ENCODE measurements at regions of chr7 and their contacts with region 1.

Region 1: DNA sequence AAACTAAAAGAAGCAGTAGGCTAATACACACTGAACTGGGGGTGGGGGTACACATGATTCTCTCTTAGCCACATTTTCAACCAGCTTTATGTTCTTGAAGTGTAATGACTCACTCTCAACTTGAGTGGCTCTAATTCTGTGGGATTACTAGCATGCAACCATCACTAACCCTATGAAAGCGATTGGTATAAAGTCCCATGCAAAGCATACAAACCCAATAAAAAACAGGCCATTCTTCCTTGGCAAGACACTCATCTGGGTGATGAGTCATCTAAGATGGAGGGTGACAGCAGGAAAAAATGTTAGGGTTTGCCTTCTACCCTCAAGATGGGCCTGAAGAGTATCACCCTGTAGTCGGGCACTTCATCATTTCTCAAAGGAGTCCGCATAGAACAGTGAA is 14.9 kb upstream of the PON3 start:
- DNase-seq: peak in 1 of 2 experiments; percentile 57
- ATAC-seq: peak; percentile 60 to 63
- H3K4me3 ChIP-seq: no peak overlapping the region
- H3K27ac ChIP-seq: peak overlapping the region; percentile 0 to 63; a peak in 4 of 6 replicates
- H3K4me1 ChIP-seq: peaks cover 86% of the 10 kb centered on the region
- CTCF ChIP-seq: no peak
- EP300 ChIP-seq: no peak
- POLR2A ChIP-seq: no peak
- RAD21 ChIP-seq: no peak

Region 2: DNA sequence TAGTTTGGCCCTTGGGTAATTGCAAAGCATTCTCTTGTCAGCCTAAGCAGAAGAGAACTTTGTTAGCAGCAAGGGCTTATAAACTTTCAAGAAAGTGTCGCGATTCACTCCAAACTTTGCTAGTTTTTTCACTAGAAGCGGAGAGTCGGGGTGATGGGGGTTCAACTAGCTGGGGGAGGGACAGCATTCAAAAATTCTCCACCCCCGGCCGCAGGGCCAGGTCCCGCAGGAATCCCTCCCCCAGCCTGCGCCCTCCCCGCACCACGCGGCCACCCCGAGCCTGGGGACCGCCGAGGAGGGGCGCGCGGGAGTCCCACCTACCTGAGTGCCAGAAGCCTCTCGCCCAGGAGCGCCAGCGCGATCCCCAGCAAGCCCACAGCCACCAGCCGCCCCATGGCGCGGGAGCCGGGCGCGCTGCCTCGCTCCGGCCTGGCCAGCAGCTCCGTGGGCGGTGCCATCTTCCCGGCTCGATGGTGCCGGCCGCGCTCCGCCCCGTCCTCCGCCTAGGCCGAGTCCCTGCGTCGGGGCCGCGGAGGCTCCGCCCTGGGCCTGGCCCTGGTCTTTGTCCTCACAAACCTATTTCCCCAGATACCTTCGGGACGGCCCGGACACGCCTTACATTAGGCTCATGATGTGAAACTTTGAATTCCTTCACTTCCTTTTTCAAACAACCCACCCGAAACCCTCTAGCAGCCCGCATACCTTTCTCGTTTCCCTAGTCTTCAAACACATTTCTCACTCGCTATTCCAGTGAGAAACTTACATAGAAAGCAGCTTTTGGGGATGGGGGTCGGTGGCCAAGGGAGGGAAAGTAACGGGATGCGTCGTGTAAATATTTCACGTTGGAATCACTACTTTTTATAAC is 23.8 kb after region 1 on chr7 and contains the start of gene PON2:
- CTCF ChIA-PET with region 1: interaction called, 3 read pairs
- POLR2A ChIA-PET with region 1: interaction called, 11 read pairs
- DNase-seq: peak; percentile 79 to 97
- ATAC-seq: peak; percentile 94 to 95
- H3K4me3 ChIP-seq: peak within 1 kb of the TSS; percentile 65
- H3K27ac ChIP-seq: peak within 1 kb of the TSS; percentile 96 to 98
- H3K4me1 ChIP-seq: peaks cover 81% of the 10 kb centered on the region
- CTCF ChIP-seq: no peak
- EP300 ChIP-seq: peak; percentile 10 to 71; a peak in 2 of 5 replicates
- POLR2A ChIP-seq: peak; percentile 88
- RAD21 ChIP-seq: no peak; a peak in 1 of 5 replicates
- polyA plus RNA-seq, gene PON2: 829 TPM in 2 replicates

Measured in A549 (cell line).